ENCODE measurements at regions of chr4 and their contacts with region 1.

Region 1: GRCh38 chr4:6834867-6835266 is 52.3 kb downstream of the KIAA0232 start:
- DNase-seq: peak; percentile 64
- H3K4me3 ChIP-seq: no peak overlapping the region
- H3K27ac ChIP-seq: no peak overlapping the region
- H3K4me1 ChIP-seq: peaks cover 6% of the 10 kb centered on the region
- H3K27me3 ChIP-seq: no peaks in the 10 kb centered on the region
- CTCF ChIP-seq: no peak

Region 2: DNA sequence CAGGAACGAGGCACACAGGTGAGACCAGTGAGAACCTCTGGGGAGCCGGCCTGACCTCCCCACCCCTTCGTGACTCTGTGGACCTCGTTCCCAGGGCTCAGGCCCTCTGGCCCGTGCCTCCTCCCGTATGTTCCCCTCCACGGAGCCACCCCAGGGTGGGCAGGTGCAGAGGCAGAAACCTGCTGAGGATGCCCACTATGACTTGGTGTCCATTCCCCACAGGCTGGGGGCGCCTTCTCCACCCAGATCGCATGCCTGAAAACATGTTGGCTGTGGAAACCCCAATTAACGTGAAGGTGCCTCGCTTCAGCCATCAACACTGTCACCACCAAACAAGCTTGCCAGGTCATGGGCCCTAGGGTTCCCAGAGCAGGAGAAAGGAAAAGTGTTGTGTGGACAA is 91.9 kb before region 1 on chr4:
- CTCF ChIA-PET with region 1: no interaction called
- dilution Hi-C with region 1: loop called (anchors 5 kb)
- in situ Hi-C with region 1: no loop called
- intact Hi-C with region 1: no loop called
- DNase-seq: no peak
- H3K4me3 ChIP-seq: no peak overlapping the region
- H3K27ac ChIP-seq: no peak overlapping the region
- H3K4me1 ChIP-seq: peaks cover 15% of the 10 kb centered on the region
- H3K27me3 ChIP-seq: no peaks in the 10 kb centered on the region
- CTCF ChIP-seq: no peak

Region 3: DNA sequence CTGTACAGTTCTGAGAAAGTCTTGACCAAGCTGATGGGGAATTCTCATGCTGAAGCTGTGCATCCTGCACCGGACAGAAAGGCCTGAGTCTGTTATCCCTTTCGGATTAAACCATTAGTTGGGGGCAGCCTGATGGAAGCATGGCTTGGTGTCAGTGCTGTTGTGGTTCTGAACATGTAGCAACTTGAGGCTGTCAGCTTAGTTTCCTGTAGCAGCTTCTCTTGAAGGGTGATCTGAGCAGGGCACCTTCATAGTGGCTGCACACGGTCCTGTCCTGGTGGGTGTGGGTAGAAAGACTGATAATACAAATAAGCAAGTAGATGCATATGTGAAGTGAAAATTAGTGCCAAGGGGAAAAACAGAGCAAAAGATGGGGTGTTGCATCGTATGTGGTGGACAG is 40.7 kb before region 1 on chr4:
- CTCF ChIA-PET with region 1: no interaction called
- dilution Hi-C with region 1: no loop called
- in situ Hi-C with region 1: no loop called
- intact Hi-C with region 1: loop called (anchors 5 kb)
- DNase-seq: peak; percentile 44
- H3K4me3 ChIP-seq: no peak overlapping the region
- H3K27ac ChIP-seq: no peak overlapping the region
- H3K4me1 ChIP-seq: peaks cover 14% of the 10 kb centered on the region
- H3K27me3 ChIP-seq: no peaks in the 10 kb centered on the region
- CTCF ChIP-seq: no peak

Region 4: DNA sequence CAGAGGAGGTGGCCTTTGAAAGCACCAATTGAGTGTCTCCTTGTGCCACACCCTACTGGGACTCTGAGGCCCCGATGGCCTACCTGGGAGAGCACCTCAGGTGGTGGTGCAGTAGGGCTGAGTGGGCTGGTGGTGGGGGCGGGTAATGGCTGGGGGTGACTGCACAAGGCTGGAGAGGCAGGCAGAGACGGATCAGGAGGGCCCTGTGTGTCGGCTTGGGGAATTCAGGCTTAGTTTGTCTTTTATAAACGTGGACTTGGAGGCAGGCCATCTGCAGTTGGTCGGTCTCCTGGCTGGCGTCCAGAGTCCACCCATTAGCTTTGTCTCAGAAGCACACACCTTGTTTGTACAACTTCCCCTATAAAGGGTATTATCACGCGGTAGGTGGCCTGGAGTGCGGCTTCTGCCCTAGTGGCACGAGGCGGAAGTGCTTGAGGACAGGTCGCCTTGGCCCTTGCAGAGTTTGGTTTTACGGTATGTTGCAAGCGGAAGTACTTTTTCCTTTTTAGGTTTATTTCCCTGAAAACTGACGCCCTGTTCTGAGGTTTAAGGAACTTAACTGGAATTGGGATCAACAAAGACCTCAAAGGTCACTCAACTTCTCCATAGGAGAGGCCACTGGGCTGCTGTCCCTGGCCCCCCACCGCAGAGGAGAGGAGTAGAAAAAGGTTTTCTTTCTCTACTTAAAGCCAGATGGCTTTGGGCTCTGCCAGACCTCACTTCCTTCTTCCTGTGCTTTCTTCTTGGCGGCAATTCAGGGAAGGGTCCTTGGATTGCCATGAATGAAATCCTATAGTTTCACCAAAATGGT is 82.8 kb after region 1 on chr4:
- CTCF ChIA-PET with region 1: no interaction called
- dilution Hi-C with region 1: no loop called
- in situ Hi-C with region 1: no loop called
- intact Hi-C with region 1: no loop called
- DNase-seq: no peak
- H3K4me3 ChIP-seq: no peak overlapping the region
- H3K27ac ChIP-seq: no peak overlapping the region
- H3K4me1 ChIP-seq: peaks cover 19% of the 10 kb centered on the region
- H3K27me3 ChIP-seq: no peaks in the 10 kb centered on the region
- CTCF ChIP-seq: peak; percentile 46 to 48

Region 5: GRCh38 chr4:7081891-7082471 is 247.1 kb after region 1 on chr4:
- CTCF ChIA-PET with region 1: no interaction called
- dilution Hi-C with region 1: no loop called
- in situ Hi-C with region 1: no loop called
- intact Hi-C with region 1: no loop called
- DNase-seq: peak; percentile 48
- H3K4me3 ChIP-seq: no peak overlapping the region
- H3K27ac ChIP-seq: no peak overlapping the region
- H3K4me1 ChIP-seq: no peaks in the 10 kb centered on the region
- H3K27me3 ChIP-seq: peaks cover 2% of the 10 kb centered on the region
- CTCF ChIP-seq: peak; percentile 49 to 69

Measured in mammary epithelial cell (primary cell).